Astrocyte of the spinal cord (primary cell): ENCODE measurements at regions of chr3 and their contacts with region 1.

Region 1: GRCh38 chr3:39288300-39288808 is 8.5 kb upstream of the CX3CR1 start:
- DNase-seq: peak; percentile 67
- H3K4me3 ChIP-seq: no peak overlapping the region
- CTCF ChIP-seq: peak; percentile 92

Region 2: GRCh38 chr3:38070013-38070412 is 1218.3 kb before region 1 on chr3:
- in situ Hi-C with region 1: no loop called
- DNase-seq: no peak
- H3K4me3 ChIP-seq: no peak overlapping the region
- CTCF ChIP-seq: no peak

Region 3: DNA sequence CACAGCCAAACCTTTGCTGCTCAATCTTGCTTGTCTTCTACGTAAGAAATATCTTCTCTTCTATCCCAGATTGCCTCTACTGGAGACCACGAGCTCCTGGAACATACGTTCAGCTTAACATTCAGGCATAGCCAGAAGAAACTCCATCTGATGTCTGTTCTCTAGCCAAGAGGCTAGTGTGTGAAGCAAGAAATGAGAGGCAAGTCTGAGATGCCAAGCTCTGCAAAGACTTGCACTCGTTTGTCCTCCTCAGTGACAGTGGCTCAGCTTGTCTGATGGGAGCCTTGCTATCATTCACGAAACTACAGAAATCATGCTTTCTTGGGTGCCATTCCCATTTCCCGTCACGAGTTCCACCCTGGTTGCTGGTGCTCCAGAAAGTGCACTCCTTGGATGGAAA is 472.3 kb before region 1 on chr3 and contains the start of gene SCN10A:
- in situ Hi-C with region 1: no loop called
- DNase-seq: no peak
- H3K4me3 ChIP-seq: no peak within 1 kb of the TSS
- CTCF ChIP-seq: no peak

Region 4: DNA sequence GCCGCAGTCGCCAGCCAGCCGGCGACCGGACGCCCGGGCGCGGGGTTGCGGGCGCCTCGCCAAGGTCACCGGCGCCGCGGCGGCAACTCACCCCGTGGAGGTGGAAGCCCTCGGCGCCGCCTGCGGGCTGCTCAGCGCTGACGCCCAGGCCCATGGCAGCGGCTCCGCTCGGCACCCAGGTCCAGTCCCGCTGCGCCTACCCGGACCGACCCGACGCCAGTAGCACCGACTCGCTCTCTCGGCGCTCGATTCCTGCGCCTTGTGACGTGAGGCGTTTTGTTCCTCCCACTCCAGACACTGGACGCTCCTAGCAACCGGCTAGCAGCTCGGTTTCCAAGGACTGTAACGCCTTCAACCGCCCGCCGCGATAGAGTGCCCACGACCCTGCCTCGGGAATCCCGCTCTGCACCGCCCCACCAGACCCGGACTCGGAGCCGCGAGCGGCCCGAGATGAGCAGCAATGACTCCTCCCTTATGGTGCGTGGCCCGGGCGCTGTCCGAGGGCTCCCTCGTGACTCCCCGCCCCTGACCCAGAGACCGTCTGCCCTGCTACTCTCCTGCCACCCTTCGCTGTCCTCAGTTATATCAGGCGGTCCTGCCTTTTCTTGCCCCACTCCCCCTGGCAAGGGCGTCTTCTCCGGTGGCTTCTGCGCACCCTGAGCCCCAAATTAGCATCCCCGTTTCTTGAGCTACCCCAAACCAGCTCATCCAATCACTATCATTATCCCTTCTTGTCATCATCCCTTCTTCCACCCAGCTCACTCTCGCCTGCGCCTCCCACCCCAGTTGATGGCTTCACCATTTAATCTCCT is 180.8 kb before region 1 on chr3 and contains the starts of genes GORASP1 and TTC21A:
- in situ Hi-C with region 1: loop called (anchors 25 kb)
- DNase-seq: peak; percentile 87
- H3K4me3 ChIP-seq: peak within 1 kb of the TSS; percentile 91
- CTCF ChIP-seq: no peak